PC-3 (cell line): ENCODE measurements at regions of chr1 and their contacts with region 1.

Region 1: GRCh38 chr1:176206961-176207902 is at the start of gene COP1:
- DNase-seq: peak; percentile 96
- ATAC-seq: peak; percentile 85
- H3K4me3 ChIP-seq: peak within 1 kb of the TSS; percentile 97
- H3K27ac ChIP-seq: peak within 1 kb of the TSS; percentile 79
- H3K4me1 ChIP-seq: peaks cover 22% of the 10 kb centered on the region
- H3K27me3 ChIP-seq: no peaks in the 10 kb centered on the region
- CTCF ChIP-seq: no peak
- total RNA-seq, gene COP1: 8.8 and 16.6 TPM in 2 replicates

Region 2: GRCh38 chr1:175023043-175023921 is 1184.0 kb before region 1 on chr1 and contains the start of gene MRPS14:
- CTCF ChIA-PET with region 1: no interaction called
- POLR2A ChIA-PET with region 1: no interaction called
- intact Hi-C with region 1: loop called (anchors 5 kb)
- DNase-seq: peak; percentile 94
- ATAC-seq: peak; percentile 96
- H3K4me3 ChIP-seq: peak within 1 kb of the TSS; percentile 97
- H3K27ac ChIP-seq: peak within 1 kb of the TSS; percentile 45; the same call in 1 of the 2 replicates
- H3K4me1 ChIP-seq: no peaks in the 10 kb centered on the region
- H3K27me3 ChIP-seq: no peaks in the 10 kb centered on the region
- CTCF ChIP-seq: no peak
- total RNA-seq, gene MRPS14: 18.8 and 21.8 TPM in 2 replicates

Region 3: GRCh38 chr1:176111835-176112234 is 95.4 kb before region 1 on chr1:
- CTCF ChIA-PET with region 1: no interaction called
- POLR2A ChIA-PET with region 1: no interaction called
- intact Hi-C with region 1: loop called (anchors 5 kb)
- DNase-seq: peak; percentile 67
- ATAC-seq: peak; percentile 99
- H3K4me3 ChIP-seq: no peak overlapping the region
- H3K27ac ChIP-seq: no peak overlapping the region
- H3K4me1 ChIP-seq: peaks cover 4% of the 10 kb centered on the region
- H3K27me3 ChIP-seq: no peaks in the 10 kb centered on the region
- CTCF ChIP-seq: no peak

Region 4: GRCh38 chr1:176773038-176773437 is 565.8 kb after region 1 on chr1:
- CTCF ChIA-PET with region 1: no interaction called
- POLR2A ChIA-PET with region 1: no interaction called
- intact Hi-C with region 1: no loop called
- DNase-seq: no peak
- ATAC-seq: no peak
- H3K4me3 ChIP-seq: no peak overlapping the region
- H3K27ac ChIP-seq: no peak overlapping the region
- H3K4me1 ChIP-seq: no peaks in the 10 kb centered on the region
- H3K27me3 ChIP-seq: peaks cover 31% of the 10 kb centered on the region
- CTCF ChIP-seq: no peak